Transverse colon (tissue), 4 donors: ENCODE measurements at regions of chr15 and their contacts with region 1.

Region 1: GRCh38 chr15:38389924-38390542 is 63.9 kb upstream of the FAM98B start:
- DNase-seq: peak; percentile 77
- H3K4me3 ChIP-seq: no peak overlapping the region
- H3K27ac ChIP-seq: no peak overlapping the region
- H3K4me1 ChIP-seq: no peaks in the 10 kb centered on the region
- H3K27me3 ChIP-seq: no peaks in the 10 kb centered on the region
- CTCF ChIP-seq: peak; percentile 66 to 84 (median 76)
- EP300 ChIP-seq: no peak
- POLR2A ChIP-seq: no peak

Region 2: GRCh38 chr15:38002883-38003477 is 387.1 kb before region 1 on chr15:
- in situ Hi-C with region 1: loop called in 1 of 4 experiments (anchors 10 kb)
- intact Hi-C with region 1: no loop called
- DNase-seq: peak; percentile 71
- H3K4me3 ChIP-seq: no peak overlapping the region
- H3K27ac ChIP-seq: no peak overlapping the region
- H3K4me1 ChIP-seq: peaks cover 0 to 9% (median 0%) of the 10 kb centered on the region in 4 donors
- H3K27me3 ChIP-seq: no peaks in the 10 kb centered on the region
- CTCF ChIP-seq: peak; percentile 56 to 73 (median 57)
- EP300 ChIP-seq: no peak
- POLR2A ChIP-seq: no peak